SK-N-SH (cell line): ENCODE measurements at regions of chr9 and their contacts with region 1.

Region 1: DNA sequence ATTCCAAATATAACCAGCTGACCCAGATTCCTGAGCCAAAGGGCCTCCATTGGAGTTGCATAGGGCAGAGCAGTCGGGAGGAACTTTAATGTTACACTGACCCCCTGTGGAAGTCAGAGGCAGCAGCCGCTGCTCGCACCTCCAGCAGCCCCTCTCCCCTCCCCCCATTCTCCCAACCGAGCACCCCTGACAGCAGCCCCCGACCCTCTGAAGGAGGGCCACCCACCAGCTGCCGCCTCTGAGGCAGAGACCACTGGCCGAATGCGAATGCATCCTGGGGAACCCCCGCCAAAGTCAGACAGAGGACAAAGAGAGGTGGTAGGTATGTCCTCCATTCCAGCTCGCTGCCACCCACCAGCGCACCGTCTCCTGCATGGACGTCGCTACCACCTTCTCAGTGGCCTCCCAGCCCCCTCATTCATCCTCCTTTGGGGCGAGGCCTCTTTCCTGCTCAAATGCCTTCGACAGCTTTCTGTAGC is 231.0 kb downstream of the CDK5RAP2 start:
- DNase-seq: peak; percentile 85
- H3K4me3 ChIP-seq: no peak overlapping the region; a peak in 1 of 4 replicates
- H3K27ac ChIP-seq: no peak overlapping the region
- H3K4me1 ChIP-seq: peaks cover 0 to 6% of the 10 kb centered on the region in 2 experiments; a peak in 1 of 4 replicates
- H3K27me3 ChIP-seq: no peaks in the 10 kb centered on the region
- CTCF ChIP-seq: peak; percentile 74
- EP300 ChIP-seq: no peak
- RAD21 ChIP-seq: peak; percentile 89

Region 2: GRCh38 chr9:119375892-119376291 is 973.1 kb before region 1 on chr9:
- CTCF ChIA-PET with region 1: interaction called, 15 read pairs
- POLR2A ChIA-PET with region 1: no interaction called
- DNase-seq: peak; percentile 32
- H3K4me3 ChIP-seq: peak overlapping the region in 1 of 2 experiments; percentile 37; a peak in 1 of 4 replicates
- H3K27ac ChIP-seq: no peak overlapping the region
- H3K4me1 ChIP-seq: no peaks in the 10 kb centered on the region
- H3K27me3 ChIP-seq: no peaks in the 10 kb centered on the region
- CTCF ChIP-seq: peak; percentile 63
- EP300 ChIP-seq: no peak
- RAD21 ChIP-seq: peak; percentile 52

Region 3: DNA sequence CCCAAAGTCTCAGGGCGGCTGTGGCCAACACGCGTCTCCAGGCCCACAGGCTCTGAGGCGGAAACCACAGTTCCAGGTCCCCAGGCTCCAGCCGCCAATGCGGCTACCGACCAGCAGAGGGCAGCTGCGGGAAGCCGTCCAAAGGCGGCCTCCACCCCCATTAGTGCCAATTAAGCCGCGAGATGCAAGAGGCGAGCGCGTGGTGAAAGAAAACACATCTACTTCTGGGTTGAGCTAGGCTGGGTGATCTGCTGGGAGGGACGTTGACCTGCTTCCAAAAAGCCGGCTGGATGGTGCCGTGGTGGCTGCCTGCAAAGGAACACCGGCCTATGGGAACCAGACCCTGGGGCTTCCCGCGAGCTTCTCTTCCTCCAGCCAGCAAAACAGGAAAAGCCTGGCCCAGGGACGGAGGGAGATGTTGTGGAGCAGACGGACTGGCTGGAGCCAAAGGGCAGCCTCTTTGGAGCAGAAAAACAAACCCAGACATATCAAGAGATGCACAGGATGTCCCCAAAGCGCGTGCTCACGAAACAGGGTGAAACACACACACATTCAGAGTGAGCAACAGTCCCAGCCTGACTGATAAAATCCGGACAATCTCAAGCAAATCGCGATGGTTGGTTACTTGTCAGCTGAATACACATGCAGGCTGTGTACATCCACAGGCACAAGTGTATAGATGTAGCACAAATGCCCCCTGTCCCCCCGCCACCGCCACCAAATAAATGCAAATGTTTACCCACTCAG is 792.7 kb before region 1 on chr9:
- CTCF ChIA-PET with region 1: interaction called, 13 read pairs
- POLR2A ChIA-PET with region 1: no interaction called
- DNase-seq: peak; percentile 81
- H3K4me3 ChIP-seq: peak overlapping the region; percentile 41 to 62
- H3K27ac ChIP-seq: peak overlapping the region in 1 of 2 experiments; percentile 86; a peak in 2 of 4 replicates
- H3K4me1 ChIP-seq: peaks cover 0 to 10% of the 10 kb centered on the region in 2 experiments; a peak in 1 of 4 replicates
- H3K27me3 ChIP-seq: no peaks in the 10 kb centered on the region
- CTCF ChIP-seq: peak; percentile 86
- EP300 ChIP-seq: no peak
- RAD21 ChIP-seq: peak; percentile 76

Region 4: GRCh38 chr9:120310035-120310434 is 39.0 kb before region 1 on chr9:
- CTCF ChIA-PET with region 1: interaction called, 10 read pairs
- POLR2A ChIA-PET with region 1: no interaction called
- DNase-seq: peak; percentile 71
- H3K4me3 ChIP-seq: no peak overlapping the region
- H3K27ac ChIP-seq: no peak overlapping the region
- H3K4me1 ChIP-seq: peaks cover 0 to 4% of the 10 kb centered on the region in 2 experiments; a peak in 1 of 4 replicates
- H3K27me3 ChIP-seq: no peaks in the 10 kb centered on the region
- CTCF ChIP-seq: no peak
- EP300 ChIP-seq: no peak
- RAD21 ChIP-seq: peak; percentile 66

Region 5: GRCh38 chr9:120360046-120360445 is 11.1 kb after region 1 on chr9:
- CTCF ChIA-PET with region 1: interaction called, 33 read pairs
- POLR2A ChIA-PET with region 1: no interaction called
- DNase-seq: no peak
- H3K4me3 ChIP-seq: no peak overlapping the region
- H3K27ac ChIP-seq: no peak overlapping the region
- H3K4me1 ChIP-seq: peaks cover 0 to 18% of the 10 kb centered on the region in 2 experiments; a peak in 1 of 4 replicates
- H3K27me3 ChIP-seq: no peaks in the 10 kb centered on the region
- CTCF ChIP-seq: no peak
- EP300 ChIP-seq: no peak
- RAD21 ChIP-seq: no peak

Region 6: DNA sequence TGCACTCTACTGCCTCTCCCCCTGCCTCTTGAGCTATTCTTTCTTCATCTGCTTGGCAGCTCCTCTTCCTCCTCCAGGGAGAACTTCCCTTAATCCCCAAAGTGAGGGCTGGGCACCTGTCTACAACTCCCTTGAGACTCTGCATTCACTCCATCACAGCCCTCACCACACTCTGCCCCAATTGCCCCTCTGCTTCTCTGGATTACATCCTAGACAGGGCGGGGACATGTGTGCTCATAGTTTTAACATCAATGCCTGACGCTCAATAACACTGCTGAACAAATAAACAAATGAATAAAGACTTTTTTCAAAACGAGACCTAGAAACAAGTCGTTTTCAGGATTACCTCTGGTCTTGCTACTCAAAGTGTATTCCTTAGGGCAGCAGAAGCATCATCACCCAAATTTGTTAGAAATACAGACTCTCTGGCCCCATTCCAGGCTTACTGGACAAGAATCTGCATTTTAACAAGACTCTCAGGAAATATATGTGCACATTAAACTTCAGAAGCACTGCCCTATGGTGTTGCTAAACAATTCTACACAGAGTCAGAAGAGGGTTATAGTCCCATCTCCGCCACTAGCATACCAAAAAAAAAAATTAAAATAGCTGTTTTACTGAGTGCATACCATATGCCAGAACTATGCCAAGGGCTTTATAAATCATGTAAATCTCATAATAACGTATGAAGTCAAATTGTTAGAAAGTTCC is 115.3 kb after region 1 on chr9:
- CTCF ChIA-PET with region 1: no interaction called
- POLR2A ChIA-PET with region 1: no interaction called
- DNase-seq: no peak
- H3K4me3 ChIP-seq: no peak overlapping the region
- H3K27ac ChIP-seq: no peak overlapping the region
- H3K4me1 ChIP-seq: no peaks in the 10 kb centered on the region; a peak in 1 of 4 replicates
- H3K27me3 ChIP-seq: no peaks in the 10 kb centered on the region
- CTCF ChIP-seq: no peak
- EP300 ChIP-seq: no peak
- RAD21 ChIP-seq: no peak